Naive thymus-derived CD4-positive, alpha-beta T cell (primary cell): ENCODE measurements at regions of chr3 and their contacts with region 1.

Region 1: GRCh38 chr3:128650096-128651050 is at the start of gene RPN1:
- DNase-seq: peak; percentile 81 to 98 (median 97)
- ATAC-seq: peak; percentile 98
- H3K4me3 ChIP-seq: peak within 1 kb of the TSS; percentile 94
- H3K4me3 Mint-ChIP-seq: peak within 1 kb of the TSS; percentile 83 to 92 (median 90)
- H3K27ac ChIP-seq: peak within 1 kb of the TSS; percentile 99
- H3K27ac Mint-ChIP-seq: peak within 1 kb of the TSS; percentile 73 to 94 (median 92)
- H3K4me1 ChIP-seq: peaks cover 12 to 17% of the 10 kb centered on the region in 2 donors
- H3K4me1 Mint-ChIP-seq: peaks cover 25 to 43% (median 37%) of the 10 kb centered on the region in 7 donors
- H3K27me3 ChIP-seq: no peaks in the 10 kb centered on the region
- H3K27me3 Mint-ChIP-seq: no peaks in the 10 kb centered on the region
- total RNA-seq, gene RPN1: 76.7 to 203 (median 88.5) TPM

Region 2: DNA sequence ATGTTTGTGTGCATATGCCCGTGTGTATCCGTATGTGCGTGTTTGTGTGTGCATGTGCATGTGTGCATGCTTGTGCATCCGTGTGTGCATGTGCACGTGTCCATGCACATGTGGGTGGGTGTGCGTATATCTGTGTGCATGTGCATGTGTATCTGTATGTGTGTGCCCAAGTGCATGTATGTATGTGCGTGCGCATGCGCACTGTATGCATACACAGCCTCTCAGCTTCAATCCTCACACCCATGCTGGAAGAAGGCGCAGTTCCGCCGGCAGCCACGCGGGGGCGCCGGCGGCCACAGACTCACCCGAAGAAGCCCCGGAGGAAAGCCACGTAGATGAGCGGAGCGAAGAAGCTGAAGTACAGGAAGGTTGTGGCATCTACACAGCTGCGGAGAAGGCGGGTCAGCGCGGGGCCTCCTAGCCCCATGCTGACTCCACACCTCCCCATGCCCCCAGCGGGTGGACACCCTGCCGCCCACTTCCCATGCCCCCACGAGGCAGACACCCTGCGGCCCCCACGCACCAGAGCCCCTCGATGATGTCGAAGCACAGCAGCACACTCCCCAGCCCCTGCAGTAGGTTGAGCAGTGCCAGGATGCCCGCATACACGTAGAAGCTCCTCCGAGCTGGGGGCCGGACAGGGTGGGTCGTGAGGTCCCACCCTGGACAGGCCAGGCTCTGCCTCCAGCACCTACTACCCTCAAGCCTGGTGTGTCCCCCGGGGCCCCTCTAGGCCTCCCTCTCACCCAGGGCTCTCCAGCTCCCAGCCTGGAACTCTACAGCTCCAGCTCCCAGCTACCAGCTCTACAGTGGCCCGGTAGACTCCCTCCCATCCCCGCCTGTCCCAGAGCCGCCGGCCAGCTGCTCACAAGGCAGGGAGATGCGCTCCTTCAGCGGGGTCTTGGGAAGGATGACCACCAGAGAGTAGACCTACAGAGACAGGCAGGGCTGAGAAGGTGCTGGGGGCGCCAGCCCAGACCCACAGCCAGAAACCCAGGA is 1075.2 kb before region 1 on chr3:
- CTCF ChIA-PET with region 1: no interaction called
- POLR2A ChIA-PET with region 1: no interaction called
- intact Hi-C with region 1: no loop called
- DNase-seq: peak; percentile 77 to 86 (median 83)
- ATAC-seq: peak; percentile 96
- H3K4me3 ChIP-seq: no peak overlapping the region
- H3K4me3 Mint-ChIP-seq: peak overlapping the region in 7 of 10 donors; percentile 18 to 57 (median 32)
- H3K27ac ChIP-seq: peak overlapping the region; percentile 39
- H3K27ac Mint-ChIP-seq: peak overlapping the region in 8 of 9 donors; percentile 4 to 81 (median 50)
- H3K4me1 ChIP-seq: peaks cover 0 to 7% of the 10 kb centered on the region in 2 donors
- H3K4me1 Mint-ChIP-seq: peaks cover 8 to 22% (median 13%) of the 10 kb centered on the region in 7 donors
- H3K27me3 ChIP-seq: no peaks in the 10 kb centered on the region
- H3K27me3 Mint-ChIP-seq: no peaks in the 10 kb centered on the region

Region 3: GRCh38 chr3:128559486-128560225 is 90.7 kb before region 1 on chr3:
- CTCF ChIA-PET with region 1: no interaction called
- POLR2A ChIA-PET with region 1: no interaction called
- intact Hi-C with region 1: no loop called
- DNase-seq: no peak
- ATAC-seq: no peak
- H3K4me3 ChIP-seq: no peak overlapping the region
- H3K4me3 Mint-ChIP-seq: peak overlapping the region in 2 of 10 donors; percentile 5 to 6
- H3K27ac ChIP-seq: no peak overlapping the region
- H3K27ac Mint-ChIP-seq: peak overlapping the region in 1 of 9 donors; percentile 0
- H3K4me1 ChIP-seq: no peaks in the 10 kb centered on the region
- H3K4me1 Mint-ChIP-seq: peaks cover 3 to 14% (median 10%) of the 10 kb centered on the region in 7 donors
- H3K27me3 ChIP-seq: peaks cover 0 to 2% of the 10 kb centered on the region in 2 donors
- H3K27me3 Mint-ChIP-seq: peaks cover 31 to 43% (median 33%) of the 10 kb centered on the region in 5 donors

Region 4: GRCh38 chr3:128573707-128574162 is 76.6 kb before region 1 on chr3:
- CTCF ChIA-PET with region 1: no interaction called
- POLR2A ChIA-PET with region 1: no interaction called
- intact Hi-C with region 1: no loop called
- DNase-seq: no peak
- ATAC-seq: no peak
- H3K4me3 ChIP-seq: no peak overlapping the region
- H3K4me3 Mint-ChIP-seq: no peak overlapping the region
- H3K27ac ChIP-seq: no peak overlapping the region
- H3K27ac Mint-ChIP-seq: no peak overlapping the region
- H3K4me1 ChIP-seq: peaks cover 0 to 13% of the 10 kb centered on the region in 2 donors
- H3K4me1 Mint-ChIP-seq: peaks cover 0 to 16% (median 12%) of the 10 kb centered on the region in 7 donors
- H3K27me3 ChIP-seq: no peaks in the 10 kb centered on the region
- H3K27me3 Mint-ChIP-seq: peaks cover 8 to 37% (median 24%) of the 10 kb centered on the region in 5 donors

Region 5: DNA sequence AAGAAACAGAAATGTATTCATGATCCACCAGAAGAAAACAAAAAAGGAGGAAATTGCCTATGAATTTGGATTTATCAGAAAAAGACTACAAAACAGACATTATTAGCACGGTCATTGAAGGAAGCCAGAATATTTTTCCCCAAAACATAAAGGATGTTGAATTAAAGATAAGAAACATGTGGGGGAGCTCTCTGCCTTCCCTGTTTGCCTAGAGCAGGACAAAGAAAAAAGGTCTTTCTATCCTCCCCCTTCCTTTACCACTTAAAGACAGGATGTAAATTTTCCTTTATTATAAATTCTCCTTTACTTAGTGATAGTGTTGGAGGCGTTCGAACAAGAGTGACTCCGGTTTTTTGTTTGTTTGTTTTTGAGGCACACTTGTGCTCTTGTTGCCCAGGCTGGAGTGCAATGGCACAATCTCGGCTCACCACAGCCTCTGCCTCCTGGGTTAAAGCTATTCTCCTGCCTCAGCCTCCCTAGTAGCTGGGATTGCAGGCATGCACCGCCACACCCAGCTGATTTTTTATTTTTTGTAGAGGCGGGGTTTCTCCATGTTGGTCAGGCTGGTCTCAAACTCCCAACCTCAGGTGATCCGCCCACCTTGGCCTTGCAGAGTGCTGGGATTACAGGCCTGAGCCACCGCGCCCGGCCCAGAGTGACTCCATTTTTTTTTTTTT is 15.1 kb after region 1 on chr3:
- CTCF ChIA-PET with region 1: no interaction called
- POLR2A ChIA-PET with region 1: no interaction called
- intact Hi-C with region 1: no loop called
- DNase-seq: no peak
- ATAC-seq: no peak
- H3K4me3 ChIP-seq: no peak overlapping the region
- H3K4me3 Mint-ChIP-seq: no peak overlapping the region
- H3K27ac ChIP-seq: no peak overlapping the region
- H3K27ac Mint-ChIP-seq: peak overlapping the region in 1 of 9 donors; percentile 33
- H3K4me1 ChIP-seq: no peaks in the 10 kb centered on the region
- H3K4me1 Mint-ChIP-seq: peaks cover 0 to 4% (median 0%) of the 10 kb centered on the region in 7 donors
- H3K27me3 ChIP-seq: no peaks in the 10 kb centered on the region
- H3K27me3 Mint-ChIP-seq: peaks cover 0 to 38% (median 0%) of the 10 kb centered on the region in 5 donors

Region 6: GRCh38 chr3:128804017-128804810 is 153.8 kb after region 1 on chr3:
- CTCF ChIA-PET with region 1: interaction called, 3 read pairs
- POLR2A ChIA-PET with region 1: no interaction called
- intact Hi-C with region 1: loop called in 1 of 2 experiments (anchors 1 kb)
- DNase-seq: peak in 8 of 9 donors; percentile 54 to 88 (median 84)
- ATAC-seq: peak; percentile 92
- H3K4me3 ChIP-seq: peak overlapping the region; percentile 49
- H3K4me3 Mint-ChIP-seq: peak overlapping the region; percentile 48 to 89 (median 80)
- H3K27ac ChIP-seq: peak overlapping the region; percentile 74
- H3K27ac Mint-ChIP-seq: peak overlapping the region; percentile 91 to 98 (median 96)
- H3K4me1 ChIP-seq: peaks cover 22 to 64% of the 10 kb centered on the region in 2 donors
- H3K4me1 Mint-ChIP-seq: peaks cover 59 to 91% (median 85%) of the 10 kb centered on the region in 7 donors
- H3K27me3 ChIP-seq: no peaks in the 10 kb centered on the region
- H3K27me3 Mint-ChIP-seq: no peaks in the 10 kb centered on the region

Region 7: DNA sequence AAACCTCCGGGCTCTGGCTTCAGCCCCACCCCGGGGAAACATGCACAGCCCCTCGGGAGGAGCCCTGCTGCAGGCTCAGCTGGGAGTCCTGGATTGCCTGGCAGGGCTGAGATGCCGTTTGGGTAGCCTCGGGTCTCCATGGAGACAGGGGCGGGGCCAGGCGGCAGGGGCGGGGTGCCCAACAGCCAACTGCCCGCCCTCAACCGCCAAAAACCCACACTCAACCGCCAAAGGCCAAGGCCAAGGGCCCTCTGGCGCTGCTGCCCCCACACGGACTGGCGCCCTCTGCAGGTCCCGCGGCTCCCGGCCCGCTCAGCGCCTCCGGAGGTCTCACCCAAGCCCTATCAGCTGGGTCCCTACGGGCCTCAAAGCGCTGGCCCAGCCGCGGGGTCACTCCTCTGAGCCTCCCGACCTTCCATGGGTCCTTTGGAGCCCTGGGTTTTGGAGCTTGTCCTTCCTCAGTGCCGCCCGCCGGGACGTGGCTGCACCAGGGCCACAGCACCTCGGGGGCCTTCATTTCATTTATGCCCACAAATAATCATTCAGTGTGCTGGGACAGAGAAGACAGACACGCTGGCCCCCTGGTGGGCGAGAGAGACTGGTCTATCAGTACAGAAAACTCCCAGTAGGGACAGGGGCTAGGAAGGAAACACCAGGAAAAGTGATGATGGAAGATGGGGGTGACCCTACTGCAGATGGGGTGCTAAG is 195.6 kb after region 1 on chr3:
- CTCF ChIA-PET with region 1: interaction called, 6 read pairs
- POLR2A ChIA-PET with region 1: interaction called, 7 read pairs
- intact Hi-C with region 1: loop called (anchors 1 kb)
- DNase-seq: peak; percentile 61 to 87 (median 74)
- ATAC-seq: peak; percentile 85
- H3K4me3 ChIP-seq: peak overlapping the region; percentile 65
- H3K4me3 Mint-ChIP-seq: peak overlapping the region; percentile 65 to 88 (median 82)
- H3K27ac ChIP-seq: peak overlapping the region; percentile 64
- H3K27ac Mint-ChIP-seq: peak overlapping the region; percentile 64 to 93 (median 81)
- H3K4me1 ChIP-seq: peaks cover 0 to 14% of the 10 kb centered on the region in 2 donors
- H3K4me1 Mint-ChIP-seq: peaks cover 11 to 22% (median 17%) of the 10 kb centered on the region in 7 donors
- H3K27me3 ChIP-seq: no peaks in the 10 kb centered on the region
- H3K27me3 Mint-ChIP-seq: peaks cover 0 to 2% (median 0%) of the 10 kb centered on the region in 5 donors

Region 8: GRCh38 chr3:128922804-128923459 is 272.6 kb after region 1 on chr3:
- CTCF ChIA-PET with region 1: no interaction called
- POLR2A ChIA-PET with region 1: no interaction called
- intact Hi-C with region 1: loop called in 1 of 2 experiments (anchors 1 kb)
- DNase-seq: peak in 8 of 9 donors; percentile 60 to 73 (median 69)
- ATAC-seq: peak; percentile 73
- H3K4me3 ChIP-seq: peak overlapping the region; percentile 41
- H3K4me3 Mint-ChIP-seq: peak overlapping the region; percentile 75 to 87 (median 84)
- H3K27ac ChIP-seq: peak overlapping the region; percentile 63
- H3K27ac Mint-ChIP-seq: peak overlapping the region; percentile 75 to 96 (median 89)
- H3K4me1 ChIP-seq: peaks cover 13 to 23% of the 10 kb centered on the region in 2 donors
- H3K4me1 Mint-ChIP-seq: peaks cover 20 to 66% (median 52%) of the 10 kb centered on the region in 7 donors
- H3K27me3 ChIP-seq: no peaks in the 10 kb centered on the region
- H3K27me3 Mint-ChIP-seq: peaks cover 0 to 3% (median 0%) of the 10 kb centered on the region in 5 donors

Region 9: GRCh38 chr3:129160891-129161859 is 510.8 kb after region 1 on chr3 and contains the start of gene ISY1:
- CTCF ChIA-PET with region 1: no interaction called
- POLR2A ChIA-PET with region 1: no interaction called
- intact Hi-C with region 1: loop called in 1 of 2 experiments (anchors 1 kb)
- DNase-seq: peak; percentile 68 to 92 (median 89)
- ATAC-seq: peak; percentile 90
- H3K4me3 ChIP-seq: peak within 1 kb of the TSS; percentile 94
- H3K4me3 Mint-ChIP-seq: peak within 1 kb of the TSS; percentile 84 to 100 (median 98)
- H3K27ac ChIP-seq: peak within 1 kb of the TSS; percentile 98
- H3K27ac Mint-ChIP-seq: peak within 1 kb of the TSS; percentile 97 to 100 (median 99)
- H3K4me1 ChIP-seq: peaks cover 22 to 24% of the 10 kb centered on the region in 2 donors
- H3K4me1 Mint-ChIP-seq: peaks cover 18 to 53% (median 40%) of the 10 kb centered on the region in 7 donors
- H3K27me3 ChIP-seq: no peaks in the 10 kb centered on the region
- H3K27me3 Mint-ChIP-seq: peaks cover 0 to 4% (median 0%) of the 10 kb centered on the region in 5 donors
- total RNA-seq, gene ISY1: 27.6 to 65.1 (median 37.4) TPM

Region 10: GRCh38 chr3:129278439-129278970 is 628.1 kb after region 1 on chr3 and contains the start of gene HMCES:
- CTCF ChIA-PET with region 1: no interaction called
- POLR2A ChIA-PET with region 1: no interaction called
- intact Hi-C with region 1: loop called in 1 of 2 experiments (anchors 5 kb)
- DNase-seq: peak; percentile 92 to 98 (median 95)
- ATAC-seq: peak; percentile 98
- H3K4me3 ChIP-seq: peak within 1 kb of the TSS; percentile 99
- H3K4me3 Mint-ChIP-seq: peak within 1 kb of the TSS; percentile 95 to 99 (median 98)
- H3K27ac ChIP-seq: peak within 1 kb of the TSS; percentile 99
- H3K27ac Mint-ChIP-seq: peak within 1 kb of the TSS; percentile 89 to 100 (median 98)
- H3K4me1 ChIP-seq: peaks cover 14 to 29% of the 10 kb centered on the region in 2 donors
- H3K4me1 Mint-ChIP-seq: peaks cover 21 to 50% (median 37%) of the 10 kb centered on the region in 7 donors
- H3K27me3 ChIP-seq: no peaks in the 10 kb centered on the region
- H3K27me3 Mint-ChIP-seq: no peaks in the 10 kb centered on the region
- total RNA-seq, gene HMCES: 45.7 to 56.4 (median 52.5) TPM

Region 11: DNA sequence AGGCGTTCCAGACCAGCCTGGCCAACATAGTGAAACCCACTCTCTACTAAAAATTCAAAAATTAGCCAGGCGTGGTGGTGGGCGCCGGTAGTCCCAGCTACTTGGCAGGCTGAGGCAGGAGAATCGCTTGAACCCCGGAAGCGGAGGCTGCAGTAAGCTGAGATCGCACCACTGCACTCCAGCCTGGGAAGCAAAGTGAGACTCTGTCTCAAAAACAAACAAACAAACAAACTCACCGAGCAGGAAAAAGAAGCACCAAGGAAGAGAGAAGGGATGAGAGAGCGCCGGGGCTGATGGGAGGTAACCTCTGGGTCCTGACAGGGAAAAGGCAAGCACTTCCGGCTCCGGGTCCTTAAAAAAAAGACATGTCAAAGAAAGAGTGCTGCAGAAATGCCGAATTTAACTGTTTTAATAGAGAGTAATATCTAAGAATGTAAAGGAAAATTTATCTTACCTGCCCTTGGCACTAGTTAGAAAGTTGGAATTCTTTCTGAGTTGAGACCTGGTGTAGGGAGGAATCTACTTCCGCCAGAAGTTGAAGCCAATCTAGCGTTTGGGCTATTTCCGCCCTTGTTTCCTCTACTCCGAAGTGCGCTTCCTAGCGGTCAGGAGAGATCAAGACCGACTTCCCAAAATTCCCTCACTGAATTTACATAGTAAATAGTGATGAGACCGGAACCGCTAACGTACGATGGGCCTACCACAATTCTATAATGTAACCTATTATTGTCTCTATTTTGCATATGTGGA is 748.9 kb after region 1 on chr3:
- CTCF ChIA-PET with region 1: no interaction called
- POLR2A ChIA-PET with region 1: no interaction called
- intact Hi-C with region 1: loop called in 1 of 2 experiments (anchors 5 kb)
- DNase-seq: peak; percentile 34 to 89 (median 81)
- ATAC-seq: peak; percentile 91
- H3K4me3 ChIP-seq: peak overlapping the region; percentile 70
- H3K4me3 Mint-ChIP-seq: peak overlapping the region; percentile 89 to 100 (median 97)
- H3K27ac ChIP-seq: peak overlapping the region; percentile 88
- H3K27ac Mint-ChIP-seq: peak overlapping the region; percentile 94 to 100 (median 98)
- H3K4me1 ChIP-seq: peaks cover 10 to 13% of the 10 kb centered on the region in 2 donors
- H3K4me1 Mint-ChIP-seq: peaks cover 23 to 47% (median 37%) of the 10 kb centered on the region in 7 donors
- H3K27me3 ChIP-seq: no peaks in the 10 kb centered on the region
- H3K27me3 Mint-ChIP-seq: no peaks in the 10 kb centered on the region